ENCODE measurements at regions of chr6 and their contacts with region 1.

Region 1: DNA sequence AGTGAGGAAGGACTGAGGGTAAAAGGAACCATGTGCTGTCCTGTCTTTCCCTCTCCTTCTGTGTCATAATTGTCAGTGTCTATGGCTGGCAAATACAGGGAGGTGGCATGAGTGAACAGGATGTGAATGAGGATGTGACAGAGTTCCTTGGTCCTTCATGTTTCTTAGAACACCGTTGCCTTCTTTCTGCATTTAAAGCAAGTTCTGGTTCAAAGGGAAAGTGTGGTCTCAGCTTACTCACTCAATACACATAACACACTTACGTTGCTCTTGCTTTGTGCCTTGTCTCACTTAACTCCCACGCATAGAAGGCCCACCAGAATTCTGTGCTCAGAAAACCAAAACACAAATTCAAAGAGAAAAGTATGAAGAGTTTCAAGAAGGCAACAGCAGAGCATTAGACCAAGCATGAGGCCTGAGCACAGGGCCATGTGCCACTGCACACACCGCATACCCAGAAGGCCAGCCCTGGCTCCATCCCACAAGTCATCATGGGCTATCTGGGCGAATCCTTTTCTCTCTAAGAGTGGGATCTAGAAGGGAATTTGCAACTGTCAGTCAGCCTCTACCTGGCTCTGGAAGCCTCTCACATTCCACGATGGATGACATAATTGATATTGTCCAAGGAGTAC is 38.9 kb upstream of the SAYSD1 start:
- DNase-seq: no peak
- H3K4me3 ChIP-seq: no peak overlapping the region
- H3K27ac ChIP-seq: no peak overlapping the region
- H3K4me1 ChIP-seq: no peaks in the 10 kb centered on the region
- H3K27me3 ChIP-seq: no peaks in the 10 kb centered on the region
- CTCF ChIP-seq: no peak

Region 2: DNA sequence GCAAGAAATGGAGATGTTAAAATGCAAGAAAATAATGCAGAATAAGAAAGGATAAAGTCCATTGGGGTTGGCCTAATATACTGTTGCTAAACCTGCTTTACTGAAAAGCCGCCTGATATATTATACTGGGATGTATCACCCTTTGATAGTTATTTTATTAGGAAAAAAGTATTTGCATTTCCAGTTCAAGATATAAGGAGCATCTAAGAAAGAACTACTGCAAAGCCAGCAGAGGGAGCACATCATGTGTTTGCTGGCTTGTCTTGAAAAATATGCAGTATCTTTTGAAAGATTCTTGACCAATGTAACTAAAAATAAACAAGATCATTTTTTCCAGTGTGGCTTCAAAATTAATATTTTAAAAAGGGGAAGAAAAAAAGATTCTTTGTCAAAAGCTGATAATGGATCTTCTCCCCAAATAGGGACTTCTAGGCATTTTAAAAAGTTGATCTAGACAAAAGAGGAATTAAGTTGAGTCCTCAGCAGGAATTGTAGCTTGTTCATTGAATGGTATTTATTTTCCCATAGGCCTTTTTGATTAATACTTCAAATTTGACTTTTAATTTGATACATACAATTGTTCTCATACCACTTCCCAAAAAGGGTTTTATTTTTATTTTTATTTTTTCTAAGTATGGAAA is 1119.5 kb before region 1 on chr6:
- intact Hi-C with region 1: no loop called
- DNase-seq: no peak
- H3K4me3 ChIP-seq: no peak overlapping the region
- H3K27ac ChIP-seq: no peak overlapping the region
- H3K4me1 ChIP-seq: no peaks in the 10 kb centered on the region
- H3K27me3 ChIP-seq: no peaks in the 10 kb centered on the region
- CTCF ChIP-seq: peak; percentile 40

Region 3: DNA sequence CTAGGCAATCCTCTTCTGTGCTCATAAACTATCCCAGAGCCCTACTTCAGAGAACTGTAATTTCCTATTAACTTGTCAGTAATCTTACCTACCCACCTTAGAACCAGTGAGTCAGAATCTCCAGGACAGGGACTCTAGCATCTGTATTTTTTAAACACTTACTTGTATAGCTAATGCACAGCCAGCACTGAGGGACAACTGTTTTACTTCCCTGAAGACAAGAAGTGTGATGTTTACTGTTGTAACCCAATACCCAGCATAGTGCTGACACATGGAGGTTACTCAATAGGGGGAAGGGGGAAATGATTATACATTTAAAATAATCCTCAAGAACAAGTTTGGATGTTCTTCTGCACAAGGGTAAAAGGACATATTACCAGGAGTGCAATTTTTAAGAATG is 645.0 kb before region 1 on chr6:
- intact Hi-C with region 1: no loop called
- DNase-seq: no peak
- H3K4me3 ChIP-seq: no peak overlapping the region
- H3K27ac ChIP-seq: no peak overlapping the region
- H3K4me1 ChIP-seq: no peaks in the 10 kb centered on the region
- H3K27me3 ChIP-seq: no peaks in the 10 kb centered on the region
- CTCF ChIP-seq: no peak

Region 4: DNA sequence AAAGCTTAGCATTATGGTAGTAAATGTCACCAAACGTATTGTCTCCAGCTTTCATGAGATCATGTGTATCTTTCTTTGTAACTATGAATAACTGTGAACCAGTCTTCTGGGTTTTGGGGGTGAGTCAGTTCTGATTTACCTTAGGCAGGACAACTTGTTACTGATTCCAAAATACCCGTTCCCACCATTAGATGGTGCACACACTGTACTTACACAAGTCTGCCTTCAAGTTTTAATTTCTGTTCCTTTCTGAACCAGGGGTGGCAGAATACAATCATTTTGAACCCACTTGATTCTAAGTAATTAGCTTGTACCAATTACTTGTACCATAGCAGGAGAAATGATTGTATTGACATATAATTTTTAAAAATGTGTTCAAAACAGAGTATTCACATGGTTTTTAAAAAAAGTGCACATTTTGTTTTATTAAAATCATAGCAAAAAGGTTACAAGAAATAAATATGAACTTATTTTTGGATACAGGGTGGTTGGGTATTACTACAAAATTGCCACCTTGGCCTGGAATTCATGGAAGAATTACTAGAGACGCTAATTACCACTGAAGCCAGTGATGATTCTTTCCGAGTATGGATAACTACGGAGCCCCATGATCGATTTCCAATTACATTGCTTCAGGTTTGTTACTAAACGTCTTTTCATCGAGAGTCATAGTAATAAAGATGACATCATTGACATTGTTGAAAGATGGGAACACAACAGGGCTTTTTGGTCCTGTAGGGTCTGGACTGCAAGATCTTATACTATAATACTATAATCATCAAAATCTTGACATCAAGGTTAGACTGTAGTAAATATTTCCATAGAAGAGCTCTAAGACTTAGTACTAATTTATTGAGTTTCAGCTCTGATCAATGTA is 180.5 kb before region 1 on chr6:
- intact Hi-C with region 1: loop called (anchors 10 kb)
- DNase-seq: no peak
- H3K4me3 ChIP-seq: no peak overlapping the region
- H3K27ac ChIP-seq: no peak overlapping the region
- H3K4me1 ChIP-seq: no peaks in the 10 kb centered on the region
- H3K27me3 ChIP-seq: peaks cover 5% of the 10 kb centered on the region
- CTCF ChIP-seq: peak; percentile 39

Measured in colonic mucosa (tissue), 4 donors.